Stomach (tissue), 19 donors: ENCODE measurements at regions of chr14 and their contacts with region 1.

Region 1: DNA sequence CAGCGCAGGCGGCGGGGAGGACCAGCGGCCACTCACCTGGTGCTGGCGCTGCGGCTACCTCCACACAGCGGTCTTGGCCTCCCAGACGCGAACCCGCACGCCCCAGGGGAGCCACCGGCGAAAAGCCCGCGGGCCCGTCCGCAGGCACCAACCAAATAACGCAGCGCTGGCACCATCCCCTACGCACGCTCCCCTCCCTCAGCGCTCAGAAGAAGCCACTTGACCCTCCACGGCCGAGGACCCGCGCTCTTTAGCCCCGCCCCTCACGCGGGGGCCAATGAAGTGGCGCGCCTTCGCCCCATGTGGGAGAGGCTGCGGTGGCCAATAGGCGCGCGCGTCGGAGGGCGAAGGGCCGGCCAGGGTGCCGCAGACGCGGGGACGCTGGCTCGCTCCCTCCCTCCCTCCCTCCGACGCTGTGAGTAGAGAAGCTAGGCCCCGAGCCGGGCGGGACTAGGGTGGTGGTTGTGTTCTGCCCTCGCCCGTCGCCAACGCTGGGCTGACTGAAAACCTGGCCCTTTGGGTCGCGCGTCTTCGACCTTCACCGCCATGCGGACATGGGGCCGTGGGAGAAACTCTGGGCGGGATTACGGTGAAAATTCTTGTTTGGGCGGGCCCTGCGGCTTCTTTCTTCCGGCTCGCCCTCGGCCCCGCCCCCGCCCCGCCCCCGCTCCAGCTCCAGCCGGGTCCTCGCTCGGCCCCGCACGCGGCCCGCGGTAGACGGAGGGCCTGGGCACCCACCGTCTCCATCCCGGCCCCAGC is at the starts of genes DMAC2L and L2HGDH:
- DNase-seq: peak; percentile 94 to 98
- H3K4me3 ChIP-seq: peak within 1 kb of the TSS; percentile 78 to 87 (median 80)
- H3K27ac ChIP-seq: peak within 1 kb of the TSS; percentile 90 to 98 (median 95)
- H3K4me1 ChIP-seq: peaks cover 8 to 26% (median 24%) of the 10 kb centered on the region in 4 donors
- H3K27me3 ChIP-seq: no peaks in the 10 kb centered on the region
- CTCF ChIP-seq: no peak
- EP300 ChIP-seq: no peak
- POLR2A ChIP-seq: peak in 2 of 4 donors; percentile 12 to 41
- total RNA-seq, gene DMAC2L: 1.3 to 83.4 (median 9.0) TPM
- total RNA-seq, gene L2HGDH: 1.2 to 31.7 (median 8.7) TPM

Region 2: GRCh38 chr14:50532502-50533240 is 220.5 kb after region 1 on chr14 and contains the start of gene MAP4K5:
- intact Hi-C with region 1: loop called (anchors 5 kb)
- DNase-seq: peak; percentile 93 to 98
- H3K4me3 ChIP-seq: peak within 1 kb of the TSS; percentile 78 to 89 (median 84)
- H3K27ac ChIP-seq: peak within 1 kb of the TSS; percentile 95 to 99 (median 97)
- H3K4me1 ChIP-seq: peaks cover 15 to 50% (median 35%) of the 10 kb centered on the region in 4 donors
- H3K27me3 ChIP-seq: no peaks in the 10 kb centered on the region
- CTCF ChIP-seq: peak in 5 of 7 experiments; percentile 82 to 97 (median 91)
- EP300 ChIP-seq: no peak
- POLR2A ChIP-seq: no peak
- total RNA-seq, gene MAP4K5: 6.4 to 297 (median 179) TPM

Region 3: DNA sequence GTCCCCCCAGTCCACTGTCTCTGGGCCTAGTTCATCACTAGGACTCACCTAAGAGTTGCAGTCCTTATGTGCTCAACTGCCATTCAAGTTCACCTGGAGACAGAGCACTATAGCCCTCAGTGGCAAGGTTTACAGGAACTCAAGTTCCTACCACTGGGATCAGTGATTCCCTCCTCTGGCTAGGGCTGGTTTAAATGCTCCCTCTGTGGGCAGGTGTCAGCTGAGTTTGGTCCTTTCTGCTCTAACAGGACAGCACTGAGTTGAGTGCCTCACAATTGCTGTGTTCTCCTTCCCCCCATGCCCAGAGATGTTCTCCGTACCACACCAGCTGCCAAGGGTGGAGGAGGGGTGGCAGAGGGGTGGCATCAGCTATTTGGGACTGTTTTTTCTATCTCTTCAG is 376.7 kb after region 1 on chr14:
- intact Hi-C with region 1: no loop called
- DNase-seq: no peak
- H3K4me3 ChIP-seq: no peak overlapping the region
- H3K27ac ChIP-seq: no peak overlapping the region
- H3K4me1 ChIP-seq: no peaks in the 10 kb centered on the region
- H3K27me3 ChIP-seq: no peaks in the 10 kb centered on the region
- CTCF ChIP-seq: no peak
- EP300 ChIP-seq: no peak
- POLR2A ChIP-seq: no peak